ENCODE measurements at regions of chr14 and their contacts with region 1.

Region 1: DNA sequence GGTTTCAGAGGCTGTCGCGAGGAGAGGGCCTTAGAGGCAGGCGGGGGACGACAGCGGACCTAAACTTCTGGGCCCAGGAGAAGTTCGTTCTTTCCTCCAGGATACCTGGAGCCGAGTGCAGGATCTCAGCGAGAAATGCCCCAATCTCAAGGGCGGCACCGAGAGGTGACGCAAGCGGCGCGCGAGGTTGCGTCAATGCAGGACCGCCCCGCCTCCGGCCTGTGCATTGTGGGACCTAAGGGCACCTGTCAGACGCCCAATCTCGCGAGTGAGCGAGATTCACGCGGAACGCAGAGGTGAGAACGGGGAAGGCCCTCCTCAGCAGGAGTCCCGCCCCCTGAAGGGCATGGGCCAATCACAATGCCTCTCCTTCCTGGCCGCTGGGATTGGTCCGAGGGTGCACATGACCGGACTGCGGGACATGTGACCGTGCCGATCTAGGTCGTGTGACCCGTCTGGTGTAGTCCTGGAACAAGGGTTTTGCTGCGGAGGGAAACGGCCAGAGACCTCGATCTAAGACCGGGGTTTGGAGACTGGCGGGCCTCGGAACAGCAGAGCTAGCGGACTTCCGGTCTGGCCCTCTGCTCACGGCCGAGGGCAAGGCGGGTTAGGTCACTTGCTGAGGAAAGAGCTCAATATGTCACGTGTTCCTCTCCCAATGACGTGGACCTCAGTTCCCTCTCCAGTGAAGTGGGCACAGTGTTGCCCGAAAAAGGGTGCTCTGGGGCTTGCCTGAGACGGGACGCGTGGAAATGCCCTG is 16.3 kb upstream of the DYNC1H1 start:
- DNase-seq: peak; percentile 100
- H3K4me3 ChIP-seq: peak overlapping the region; percentile 88
- H3K4me3 Mint-ChIP-seq: peak overlapping the region; percentile 92
- H3K27ac Mint-ChIP-seq: peak overlapping the region; percentile 98
- H3K4me1 ChIP-seq: no peaks in the 10 kb centered on the region
- H3K4me1 Mint-ChIP-seq: no peaks in the 10 kb centered on the region
- H3K27me3 ChIP-seq: no peaks in the 10 kb centered on the region
- H3K27me3 Mint-ChIP-seq: no peaks in the 10 kb centered on the region
- CTCF ChIP-seq: no peak

Region 2: GRCh38 chr14:101707068-101707842 is 240.8 kb before region 1 on chr14:
- CTCF ChIA-PET with region 1: interaction called, 3 read pairs
- POLR2A ChIA-PET with region 1: no interaction called
- intact Hi-C with region 1: loop called (anchors 5 kb)
- DNase-seq: peak; percentile 50 to 72
- H3K4me3 ChIP-seq: no peak overlapping the region
- H3K4me3 Mint-ChIP-seq: no peak overlapping the region
- H3K27ac Mint-ChIP-seq: no peak overlapping the region
- H3K4me1 ChIP-seq: 0 out of 2 replicates have a peak, but pooled peaks cover 4% of the 10 kb centered on the region
- H3K4me1 Mint-ChIP-seq: no peaks in the 10 kb centered on the region
- H3K27me3 ChIP-seq: no peaks in the 10 kb centered on the region
- H3K27me3 Mint-ChIP-seq: peaks cover 4% of the 10 kb centered on the region
- CTCF ChIP-seq: peak; percentile 60 to 82

Region 3: GRCh38 chr14:101761032-101761880 is 186.8 kb before region 1 on chr14 and contains the start of gene PPP2R5C:
- CTCF ChIA-PET with region 1: no interaction called
- POLR2A ChIA-PET with region 1: interaction called, 4 read pairs
- intact Hi-C with region 1: loop called (anchors 5 kb)
- DNase-seq: peak; percentile 88 to 92
- H3K4me3 ChIP-seq: peak within 1 kb of the TSS; percentile 89
- H3K4me3 Mint-ChIP-seq: peak within 1 kb of the TSS; percentile 76
- H3K27ac Mint-ChIP-seq: no peak within 1 kb of the TSS
- H3K4me1 ChIP-seq: 0 out of 2 replicates have a peak, but pooled peaks cover 3% of the 10 kb centered on the region
- H3K4me1 Mint-ChIP-seq: no peaks in the 10 kb centered on the region
- H3K27me3 ChIP-seq: no peaks in the 10 kb centered on the region
- H3K27me3 Mint-ChIP-seq: peaks cover 12% of the 10 kb centered on the region
- CTCF ChIP-seq: no peak
- total RNA-seq, gene PPP2R5C: 86.8 and 97.5 TPM in 2 replicates

Region 4: DNA sequence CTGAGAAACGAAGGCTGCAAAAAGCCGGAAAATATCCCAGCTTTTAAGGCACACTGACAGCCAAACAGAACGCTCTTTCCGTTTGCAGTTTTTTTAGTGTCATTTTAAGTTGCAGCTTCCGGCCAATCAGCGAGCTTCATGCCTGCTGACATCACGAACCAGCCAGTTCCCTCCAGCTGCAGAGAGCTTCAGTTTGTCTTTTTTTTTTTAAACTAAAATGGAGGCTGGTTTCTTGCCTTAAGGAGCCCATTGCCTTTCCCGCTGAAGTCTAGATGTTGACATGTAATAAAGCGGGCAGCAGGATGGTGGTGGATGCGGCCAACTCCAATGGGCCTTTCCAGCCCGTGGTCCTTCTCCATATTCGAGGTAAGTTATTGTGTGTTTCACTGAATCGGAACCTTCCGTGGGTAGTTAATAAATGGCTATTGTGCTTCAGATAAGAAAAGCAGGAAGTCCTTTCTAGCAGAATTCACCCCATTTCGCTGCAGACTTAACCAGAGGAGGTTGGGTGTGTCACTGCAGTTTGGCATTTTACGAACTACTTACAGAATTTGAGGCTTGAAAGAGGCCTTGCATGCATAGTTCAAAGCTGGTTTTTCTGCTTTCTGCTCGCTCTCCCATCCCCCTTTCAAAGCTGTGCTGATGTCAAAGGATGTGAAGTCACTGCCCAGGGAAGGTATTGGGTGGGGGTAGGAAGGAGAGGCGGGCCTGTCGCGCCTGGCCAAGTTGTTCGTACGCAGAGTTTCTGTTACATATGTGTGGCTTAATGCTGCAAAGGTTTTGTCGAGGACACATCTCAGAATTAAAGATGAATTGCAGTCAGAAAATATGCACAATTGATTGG is 138.2 kb before region 1 on chr14:
- CTCF ChIA-PET with region 1: no interaction called
- POLR2A ChIA-PET with region 1: no interaction called
- intact Hi-C with region 1: loop called (anchors 2 kb)
- DNase-seq: peak; percentile 87 to 89
- H3K4me3 ChIP-seq: peak overlapping the region; percentile 40
- H3K4me3 Mint-ChIP-seq: peak overlapping the region; percentile 97
- H3K27ac Mint-ChIP-seq: peak overlapping the region; percentile 99
- H3K4me1 ChIP-seq: peaks cover 12% of the 10 kb centered on the region; the same call in 1 of the 2 replicates
- H3K4me1 Mint-ChIP-seq: peaks cover 5% of the 10 kb centered on the region
- H3K27me3 ChIP-seq: no peaks in the 10 kb centered on the region
- H3K27me3 Mint-ChIP-seq: no peaks in the 10 kb centered on the region
- CTCF ChIP-seq: no peak

Region 5: DNA sequence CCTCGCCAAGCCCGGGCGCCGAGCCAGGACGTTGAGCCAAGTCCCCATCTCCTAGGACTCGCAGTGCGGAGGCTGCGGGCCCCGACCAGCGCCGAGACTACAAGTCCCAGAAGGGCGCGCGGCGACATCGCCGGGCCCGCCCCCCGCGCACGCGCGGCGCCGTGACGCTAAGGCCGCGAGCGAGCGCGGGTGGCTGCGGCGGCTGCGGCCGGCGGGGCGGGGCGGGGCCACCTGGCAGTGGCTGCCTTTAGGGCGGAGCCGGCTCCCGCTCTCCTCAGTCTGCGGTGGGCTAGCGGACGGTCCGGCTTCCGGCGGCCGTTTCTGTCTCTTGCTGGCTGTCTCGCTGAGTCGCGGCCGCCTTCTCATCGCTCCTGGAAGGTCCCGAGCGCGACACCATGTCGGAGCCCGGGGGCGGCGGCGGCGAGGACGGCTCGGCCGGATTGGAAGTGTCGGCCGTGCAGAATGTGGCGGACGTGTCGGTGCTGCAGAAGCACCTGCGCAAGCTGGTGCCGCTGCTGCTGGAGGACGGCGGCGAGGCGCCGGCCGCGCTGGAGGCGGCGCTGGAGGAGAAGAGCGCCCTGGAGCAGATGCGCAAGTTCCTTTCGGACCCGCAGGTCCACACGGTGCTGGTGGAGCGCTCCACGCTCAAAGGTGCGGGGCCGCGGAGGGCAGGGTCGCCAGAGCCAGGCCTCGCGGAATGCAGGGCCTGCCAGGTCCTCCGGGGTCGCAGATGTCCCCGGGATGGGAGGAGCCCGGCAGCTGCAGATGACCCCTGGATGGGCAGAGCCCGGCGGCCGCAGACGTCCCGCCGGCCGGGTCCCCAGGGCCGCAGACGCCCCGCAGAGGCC is 16.4 kb after region 1 on chr14 and contains the start of gene DYNC1H1:
- CTCF ChIA-PET with region 1: interaction called, 3 read pairs
- POLR2A ChIA-PET with region 1: no interaction called
- intact Hi-C with region 1: loop called (anchors 1 kb)
- DNase-seq: peak; percentile 84 to 93
- H3K4me3 ChIP-seq: peak within 1 kb of the TSS; percentile 84
- H3K4me3 Mint-ChIP-seq: peak within 1 kb of the TSS; percentile 79
- H3K27ac Mint-ChIP-seq: peak within 1 kb of the TSS; percentile 42
- H3K4me1 ChIP-seq: peaks cover 21% of the 10 kb centered on the region
- H3K4me1 Mint-ChIP-seq: peaks cover 12% of the 10 kb centered on the region
- H3K27me3 ChIP-seq: no peaks in the 10 kb centered on the region
- H3K27me3 Mint-ChIP-seq: no peaks in the 10 kb centered on the region
- CTCF ChIP-seq: no peak
- total RNA-seq, gene DYNC1H1: 349 and 351 TPM in 2 replicates

Region 6: DNA sequence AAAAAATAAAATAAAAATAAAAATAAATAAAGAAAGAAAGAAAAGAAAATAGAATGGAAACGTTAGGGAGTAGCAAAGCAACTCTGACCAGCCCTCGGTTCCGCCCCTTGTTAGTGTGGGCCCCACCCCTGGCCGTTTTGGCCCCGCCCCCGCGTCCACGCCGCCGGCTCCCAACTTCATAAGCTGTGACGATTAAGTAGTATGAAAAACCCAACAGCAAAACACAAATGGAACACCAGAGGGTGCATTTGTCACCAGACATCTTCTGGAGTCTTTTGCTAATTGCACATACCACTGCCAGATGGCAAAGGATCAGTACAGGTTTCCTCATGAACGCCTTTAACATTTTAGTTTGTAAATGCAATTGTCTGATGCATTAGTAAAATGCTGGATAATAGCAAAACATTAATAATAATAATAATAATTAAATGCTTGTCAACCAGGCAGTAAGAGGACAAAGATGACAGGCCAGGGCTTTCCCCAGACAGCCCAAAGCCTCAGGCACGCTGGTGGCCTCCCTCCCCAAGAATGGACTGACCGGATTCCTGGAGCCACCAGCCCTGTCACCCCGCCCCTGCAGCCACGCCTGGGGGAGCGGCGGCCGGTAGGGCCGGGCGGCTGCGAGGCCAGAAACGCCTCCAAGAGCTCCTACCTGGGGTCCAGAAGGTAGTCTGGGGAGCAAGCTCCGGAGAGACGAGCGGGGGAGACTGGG is 115.2 kb after region 1 on chr14:
- CTCF ChIA-PET with region 1: no interaction called
- POLR2A ChIA-PET with region 1: interaction called, 10 read pairs
- intact Hi-C with region 1: no loop called
- DNase-seq: peak; percentile 87 to 89
- H3K4me3 ChIP-seq: 0 out of 2 replicates have a peak overlapping the region, but pooled peaks have one; percentile 13
- H3K4me3 Mint-ChIP-seq: peak overlapping the region; percentile 63
- H3K27ac Mint-ChIP-seq: peak overlapping the region; percentile 85
- H3K4me1 ChIP-seq: peaks cover 10% of the 10 kb centered on the region
- H3K4me1 Mint-ChIP-seq: peaks cover 7% of the 10 kb centered on the region
- H3K27me3 ChIP-seq: no peaks in the 10 kb centered on the region
- H3K27me3 Mint-ChIP-seq: no peaks in the 10 kb centered on the region
- CTCF ChIP-seq: peak; percentile 34 to 45

Region 7: DNA sequence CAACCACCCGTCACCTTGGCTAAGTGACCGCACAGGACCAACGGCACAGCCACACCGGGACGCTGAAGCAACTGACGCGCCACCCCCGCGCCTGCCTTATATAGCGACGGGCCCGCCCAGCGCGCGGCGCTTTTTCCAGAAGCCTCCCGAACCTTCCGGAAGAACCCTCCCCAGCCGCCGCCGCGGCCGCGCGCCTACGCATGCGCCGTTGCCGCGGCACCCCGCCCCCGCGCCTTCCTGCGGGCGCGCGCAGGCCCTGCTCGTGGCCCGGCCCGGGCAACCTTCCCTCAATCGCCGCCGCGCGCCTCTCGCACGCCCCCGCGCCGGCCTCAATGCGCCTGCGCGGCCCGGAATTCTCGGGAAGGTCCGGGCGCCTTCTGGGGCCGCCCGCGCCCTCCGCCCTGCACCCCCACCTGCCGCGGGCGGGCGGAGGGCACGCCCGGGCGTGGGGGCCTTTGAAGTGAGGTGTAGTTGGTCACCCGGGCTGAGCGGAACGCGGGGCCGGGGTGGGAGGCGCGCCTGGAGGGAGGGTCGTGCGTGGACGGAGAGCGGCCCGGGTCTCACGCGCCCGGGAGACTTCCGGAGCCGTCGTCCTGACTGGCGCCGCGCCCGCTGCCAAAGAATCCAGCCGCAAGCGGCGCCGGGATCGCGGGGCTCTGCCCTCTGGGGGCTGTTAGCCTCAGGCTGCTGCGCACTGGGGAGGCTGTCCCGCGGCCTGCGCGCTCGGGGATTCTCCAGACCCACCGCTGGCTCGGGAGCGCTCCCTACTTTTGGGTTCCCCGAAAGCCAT is 139.1 kb after region 1 on chr14 and contains the start of gene HSP90AA1:
- CTCF ChIA-PET with region 1: no interaction called
- POLR2A ChIA-PET with region 1: no interaction called
- intact Hi-C with region 1: loop called (anchors 1 kb)
- DNase-seq: peak; percentile 90 to 96
- H3K4me3 ChIP-seq: peak within 1 kb of the TSS; percentile 87
- H3K4me3 Mint-ChIP-seq: peak within 1 kb of the TSS; percentile 81
- H3K27ac Mint-ChIP-seq: peak within 1 kb of the TSS; percentile 71
- H3K4me1 ChIP-seq: peaks cover 29% of the 10 kb centered on the region
- H3K4me1 Mint-ChIP-seq: peaks cover 30% of the 10 kb centered on the region
- H3K27me3 ChIP-seq: no peaks in the 10 kb centered on the region
- H3K27me3 Mint-ChIP-seq: no peaks in the 10 kb centered on the region
- CTCF ChIP-seq: peak in 1 of 2 experiments; percentile 33
- total RNA-seq, gene HSP90AA1: 464 and 478 TPM in 2 replicates

Region 8: DNA sequence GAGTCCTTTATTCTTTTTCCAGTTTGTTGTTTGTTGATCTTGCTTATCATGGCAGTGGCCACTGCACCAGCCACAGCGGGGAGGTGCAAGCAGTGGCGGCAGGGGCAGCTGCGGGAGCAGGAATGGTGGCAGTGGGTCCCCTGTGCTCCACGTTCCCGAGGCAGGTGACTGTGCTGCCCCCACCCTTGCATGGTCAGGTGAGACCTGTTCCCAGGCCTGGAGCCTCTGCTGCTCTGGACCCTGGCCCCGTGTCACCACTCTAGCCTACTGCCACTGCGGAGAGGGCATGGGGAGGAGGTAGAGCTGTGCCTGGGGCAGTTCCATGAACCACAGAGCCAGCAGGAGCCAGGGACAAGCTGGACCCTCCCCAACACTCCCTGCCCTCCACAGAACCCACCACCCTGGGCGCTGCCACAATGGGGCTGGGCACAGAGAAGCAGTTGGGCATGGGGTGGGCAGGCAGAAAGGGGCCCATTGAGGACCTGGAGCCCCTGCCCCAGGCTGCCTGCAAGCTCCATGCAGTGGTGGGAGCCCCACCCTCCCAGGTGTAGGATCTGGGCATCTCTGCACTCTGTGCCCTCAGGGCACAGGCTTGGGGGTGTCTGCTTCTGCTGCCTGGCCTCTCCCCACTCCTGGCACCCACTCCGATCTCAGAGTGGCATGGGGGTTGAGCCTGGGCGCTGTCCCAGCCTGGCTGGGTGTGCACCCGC is 168.4 kb after region 1 on chr14:
- CTCF ChIA-PET with region 1: no interaction called
- POLR2A ChIA-PET with region 1: no interaction called
- intact Hi-C with region 1: no loop called
- DNase-seq: no peak
- H3K4me3 ChIP-seq: no peak overlapping the region
- H3K4me3 Mint-ChIP-seq: no peak overlapping the region
- H3K27ac Mint-ChIP-seq: no peak overlapping the region
- H3K4me1 ChIP-seq: no peaks in the 10 kb centered on the region
- H3K4me1 Mint-ChIP-seq: no peaks in the 10 kb centered on the region
- H3K27me3 ChIP-seq: no peaks in the 10 kb centered on the region
- H3K27me3 Mint-ChIP-seq: no peaks in the 10 kb centered on the region
- CTCF ChIP-seq: no peak